ENCODE measurements at regions of chr16 and their contacts with region 1.

Region 1: DNA sequence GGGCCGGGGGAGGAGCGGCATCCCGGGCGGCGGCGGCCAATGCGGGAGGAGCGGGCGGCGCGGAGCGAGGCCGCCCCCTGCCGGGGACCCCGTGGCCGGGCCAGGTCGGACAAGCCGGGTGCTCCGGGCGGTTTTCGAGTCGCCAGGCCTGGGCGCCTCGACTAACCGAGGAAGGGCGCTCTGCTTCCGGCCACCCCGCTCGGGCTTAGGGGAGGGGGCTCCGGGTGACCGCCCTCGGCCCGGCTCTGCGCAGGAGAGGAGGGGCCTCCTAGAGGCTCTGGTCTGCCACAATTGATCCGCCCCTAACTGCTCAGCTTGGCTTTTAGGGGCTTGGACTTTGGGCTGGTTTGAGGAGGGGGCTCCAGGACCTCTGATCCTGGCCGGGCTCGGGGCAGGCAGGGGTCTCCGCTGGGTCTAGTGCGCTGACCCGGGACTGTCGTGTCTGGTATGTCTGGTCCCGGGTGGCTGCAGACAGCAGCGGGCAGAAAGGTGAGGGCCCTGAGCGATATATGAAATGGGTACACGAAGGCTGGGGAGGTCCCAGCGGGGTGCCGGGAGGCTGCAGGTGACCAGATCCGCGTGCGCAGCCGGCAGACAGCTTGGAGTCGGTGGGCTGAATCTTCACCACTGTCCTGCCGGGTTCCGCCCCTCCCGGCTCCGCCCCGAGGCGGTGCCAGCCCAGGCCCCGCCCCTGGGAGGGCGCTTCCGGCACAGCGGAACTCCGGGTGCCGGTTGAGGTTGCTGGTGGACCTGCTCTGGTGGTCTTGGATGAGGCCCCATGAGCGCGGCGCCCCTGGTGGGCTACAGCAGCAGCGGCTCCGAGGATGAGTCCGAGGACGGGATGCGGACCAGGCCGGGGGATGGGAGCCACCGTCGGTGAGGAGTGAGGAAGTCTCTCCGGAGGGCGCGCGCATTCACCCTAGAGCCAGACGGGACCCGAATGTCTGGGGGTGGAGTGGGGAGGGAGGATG is at the start of gene USB1:
- DNase-seq: peak; percentile 63 to 92 (median 80)
- ATAC-seq: peak; percentile 73
- H3K4me3 ChIP-seq: peak within 1 kb of the TSS; percentile 96
- H3K4me3 Mint-ChIP-seq: peak within 1 kb of the TSS; percentile 92
- H3K27ac ChIP-seq: peak within 1 kb of the TSS; percentile 79 to 86
- H3K27ac Mint-ChIP-seq: peak within 1 kb of the TSS; percentile 87
- H3K4me1 ChIP-seq: peaks cover 59% of the 10 kb centered on the region
- H3K4me1 Mint-ChIP-seq: peaks cover 57% of the 10 kb centered on the region
- H3K27me3 ChIP-seq: no peaks in the 10 kb centered on the region
- H3K27me3 Mint-ChIP-seq: no peaks in the 10 kb centered on the region
- CTCF ChIP-seq: peak; percentile 68
- total RNA-seq, gene USB1: 22.4 to 25.7 TPM

Region 2: GRCh38 chr16:57576429-57576870 is 424.5 kb before region 1 on chr16:
- CTCF ChIA-PET with region 1: no interaction called
- POLR2A ChIA-PET with region 1: no interaction called
- intact Hi-C with region 1: loop called (anchors 2 to 5 kb)
- DNase-seq: peak; percentile 69 to 89 (median 80)
- ATAC-seq: peak; percentile 94
- H3K4me3 ChIP-seq: no peak overlapping the region
- H3K4me3 Mint-ChIP-seq: no peak overlapping the region
- H3K27ac ChIP-seq: no peak overlapping the region
- H3K27ac Mint-ChIP-seq: no peak overlapping the region
- H3K4me1 ChIP-seq: peaks cover 35% of the 10 kb centered on the region
- H3K4me1 Mint-ChIP-seq: peaks cover 29% of the 10 kb centered on the region
- H3K27me3 ChIP-seq: no peaks in the 10 kb centered on the region
- H3K27me3 Mint-ChIP-seq: peaks cover 7% of the 10 kb centered on the region
- CTCF ChIP-seq: peak; percentile 98

Region 3: DNA sequence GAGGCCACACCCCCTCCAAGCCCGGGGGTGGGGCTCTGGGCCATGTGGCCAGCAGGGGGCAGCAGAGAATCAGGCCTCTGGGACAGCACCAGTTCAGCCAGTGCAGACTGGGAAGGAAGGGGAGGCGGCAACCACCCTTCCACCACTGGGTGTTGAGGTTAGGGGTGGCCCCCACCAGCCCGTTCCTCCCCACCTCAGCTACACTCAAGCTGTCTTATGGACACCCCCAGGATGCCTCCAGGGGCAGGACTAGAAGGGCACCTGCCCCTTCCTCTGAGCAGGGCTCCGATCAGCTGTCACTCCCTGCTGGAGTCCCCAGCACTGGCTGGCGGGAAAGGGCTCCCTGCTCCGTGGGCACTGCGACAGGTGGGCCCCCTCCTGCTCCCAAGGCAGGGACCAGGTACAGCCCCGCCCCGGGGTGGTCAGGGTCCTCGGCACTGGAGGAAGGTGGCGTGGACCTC is 243.6 kb before region 1 on chr16:
- CTCF ChIA-PET with region 1: no interaction called
- POLR2A ChIA-PET with region 1: no interaction called
- intact Hi-C with region 1: loop called in 1 of 2 experiments (anchors 2 kb)
- DNase-seq: peak; percentile 79 to 93 (median 88)
- ATAC-seq: peak; percentile 98
- H3K4me3 ChIP-seq: no peak overlapping the region
- H3K4me3 Mint-ChIP-seq: no peak overlapping the region
- H3K27ac ChIP-seq: no peak overlapping the region
- H3K27ac Mint-ChIP-seq: no peak overlapping the region
- H3K4me1 ChIP-seq: peaks cover 15% of the 10 kb centered on the region
- H3K4me1 Mint-ChIP-seq: no peaks in the 10 kb centered on the region
- H3K27me3 ChIP-seq: no peaks in the 10 kb centered on the region
- H3K27me3 Mint-ChIP-seq: no peaks in the 10 kb centered on the region
- CTCF ChIP-seq: peak; percentile 89

Region 4: DNA sequence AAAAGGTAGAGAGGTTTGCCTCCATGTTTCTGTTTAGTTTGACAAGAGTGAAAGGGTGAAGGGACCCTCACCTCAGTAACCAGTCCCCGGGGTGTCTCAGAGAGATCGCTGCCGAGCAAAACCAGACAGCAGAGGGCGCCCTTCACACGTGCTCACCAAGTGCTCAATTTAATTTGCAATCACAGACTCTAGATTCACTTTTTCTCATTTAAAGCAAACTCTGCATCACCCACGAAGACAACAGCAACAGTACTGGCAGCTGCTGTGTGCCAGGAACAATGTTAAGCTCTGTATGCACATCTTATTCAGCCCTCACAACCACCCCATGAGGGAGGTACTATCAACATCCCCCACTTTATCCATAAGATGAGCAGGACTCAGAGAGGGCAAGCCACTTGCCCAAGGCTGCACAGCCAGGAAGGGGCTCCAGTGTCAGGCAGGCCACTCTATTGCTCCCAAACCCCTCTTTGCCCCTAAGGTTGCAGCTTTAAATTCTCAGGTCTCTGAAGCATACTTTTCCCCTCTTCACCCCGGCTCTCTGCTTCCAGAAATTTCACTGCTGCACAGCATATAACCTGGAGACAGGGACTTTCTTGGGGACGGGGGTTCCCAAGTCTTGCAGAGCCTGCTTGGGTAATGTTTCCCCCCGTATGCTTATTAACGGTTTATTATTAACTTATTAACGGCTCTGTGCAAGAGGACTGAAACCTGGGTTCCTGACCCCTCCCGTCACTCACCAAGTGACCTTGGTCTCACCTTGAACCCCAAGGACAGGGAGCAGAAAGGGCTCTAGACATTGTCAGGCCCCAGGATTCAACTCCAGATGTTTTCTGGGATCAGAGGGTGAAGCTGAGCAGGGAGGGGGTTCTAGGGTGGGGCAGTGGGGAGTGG is 101.0 kb before region 1 on chr16:
- CTCF ChIA-PET with region 1: interaction called, 3 read pairs
- POLR2A ChIA-PET with region 1: interaction called, 4 read pairs
- intact Hi-C with region 1: loop called (anchors 1 kb)
- DNase-seq: peak; percentile 62 to 90 (median 78)
- ATAC-seq: peak; percentile 67
- H3K4me3 ChIP-seq: no peak overlapping the region
- H3K4me3 Mint-ChIP-seq: no peak overlapping the region
- H3K27ac ChIP-seq: no peak overlapping the region
- H3K27ac Mint-ChIP-seq: no peak overlapping the region
- H3K4me1 ChIP-seq: peaks cover 4% of the 10 kb centered on the region
- H3K4me1 Mint-ChIP-seq: peaks cover 6% of the 10 kb centered on the region
- H3K27me3 ChIP-seq: peaks cover 0 to 6% of the 10 kb centered on the region in 2 experiments
- H3K27me3 Mint-ChIP-seq: peaks cover 24% of the 10 kb centered on the region
- CTCF ChIP-seq: peak; percentile 83

Region 5: DNA sequence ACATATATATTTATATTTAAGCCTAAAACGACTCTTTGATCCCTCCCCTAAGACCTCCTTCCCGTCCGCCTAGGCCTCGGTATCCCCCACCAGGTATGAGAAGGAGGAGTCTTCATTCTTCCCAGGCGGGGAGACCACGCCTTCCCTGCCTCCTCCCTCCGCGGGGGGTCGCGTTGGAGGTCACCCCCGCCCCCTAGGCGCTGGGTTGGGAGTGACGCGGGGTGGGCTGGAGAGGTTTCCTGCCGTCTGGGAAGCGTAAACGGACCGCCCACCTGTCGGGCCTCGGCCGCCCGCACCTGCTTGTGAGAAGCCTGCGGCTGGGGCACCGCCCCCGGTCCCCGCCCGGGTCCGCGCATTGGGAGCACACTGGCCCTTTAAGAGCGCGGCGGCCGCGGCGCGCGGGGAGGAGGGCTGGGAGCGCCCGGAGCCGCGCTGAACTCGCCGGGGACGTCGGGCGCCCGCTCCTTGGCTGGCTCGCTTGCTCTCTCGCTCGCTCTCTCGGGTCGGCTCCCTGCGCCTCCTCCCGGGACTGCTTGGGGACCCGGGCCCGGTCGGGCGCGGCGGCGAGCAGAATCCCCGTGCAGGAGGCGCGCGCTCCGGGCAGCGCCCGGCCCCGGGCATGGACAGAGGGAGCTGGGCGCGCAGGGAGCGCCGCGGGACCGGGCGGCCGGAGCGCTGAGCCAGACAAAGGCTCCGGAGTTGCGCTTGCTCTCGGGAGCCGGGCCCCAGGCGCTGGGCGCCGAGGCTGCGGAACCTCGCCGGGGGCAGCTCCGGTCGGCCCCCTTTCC is 24.6 kb after region 1 on chr16 and contains the start of gene MMP15:
- CTCF ChIA-PET with region 1: no interaction called
- POLR2A ChIA-PET with region 1: interaction called, 13 read pairs
- intact Hi-C with region 1: no loop called
- DNase-seq: peak; percentile 22 to 80 (median 56)
- ATAC-seq: peak; percentile 61
- H3K4me3 ChIP-seq: peak within 1 kb of the TSS; percentile 61
- H3K4me3 Mint-ChIP-seq: peak within 1 kb of the TSS; percentile 96
- H3K27ac ChIP-seq: no peak within 1 kb of the TSS
- H3K27ac Mint-ChIP-seq: peak within 1 kb of the TSS; percentile 81
- H3K4me1 ChIP-seq: peaks cover 34% of the 10 kb centered on the region
- H3K4me1 Mint-ChIP-seq: peaks cover 18% of the 10 kb centered on the region
- H3K27me3 ChIP-seq: peaks cover 7 to 13% of the 10 kb centered on the region in 2 experiments
- H3K27me3 Mint-ChIP-seq: peaks cover 9% of the 10 kb centered on the region
- CTCF ChIP-seq: no peak
- total RNA-seq, gene MMP15: 0.25 to 0.31 TPM

Region 6: DNA sequence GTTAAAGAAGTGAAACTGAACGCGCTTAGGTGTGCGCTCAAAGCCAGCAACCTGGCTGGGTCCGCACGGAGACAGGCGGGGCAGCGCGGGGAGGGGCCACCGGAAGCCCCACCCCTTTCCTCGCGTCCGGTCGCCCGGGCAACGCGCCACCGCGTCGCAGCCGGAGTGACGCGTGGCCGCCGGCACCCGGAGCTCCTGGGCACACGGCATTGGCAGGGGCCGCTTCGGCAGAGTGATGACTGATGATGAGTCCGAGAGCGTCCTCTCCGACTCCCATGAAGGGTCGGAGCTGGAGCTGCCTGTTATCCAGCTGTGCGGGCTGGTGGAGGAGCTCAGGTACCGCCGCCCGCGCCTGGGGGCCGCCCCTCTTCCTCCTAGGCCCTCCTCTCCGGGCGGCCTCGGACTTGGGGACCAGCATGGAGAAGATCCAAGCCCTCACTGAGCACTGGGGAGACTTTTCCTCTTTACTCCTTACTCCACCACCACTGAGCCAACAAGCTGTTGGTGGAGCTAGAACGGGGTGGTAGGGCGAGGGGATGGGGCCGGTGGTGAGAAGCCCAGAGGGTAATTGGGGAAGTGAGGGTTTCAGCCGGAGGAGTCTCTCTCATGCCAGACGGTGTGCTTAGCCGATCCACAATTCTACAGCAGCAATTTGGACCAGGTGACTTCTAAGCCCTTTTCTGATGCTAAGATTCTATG is 248.9 kb after region 1 on chr16:
- CTCF ChIA-PET with region 1: no interaction called
- POLR2A ChIA-PET with region 1: no interaction called
- intact Hi-C with region 1: loop called in 1 of 2 experiments (anchors 5 kb)
- DNase-seq: peak; percentile 65 to 94 (median 82)
- ATAC-seq: peak; percentile 98
- H3K4me3 ChIP-seq: peak overlapping the region; percentile 73
- H3K4me3 Mint-ChIP-seq: peak overlapping the region; percentile 84
- H3K27ac ChIP-seq: no peak overlapping the region
- H3K27ac Mint-ChIP-seq: no peak overlapping the region
- H3K4me1 ChIP-seq: peaks cover 16% of the 10 kb centered on the region
- H3K4me1 Mint-ChIP-seq: peaks cover 14% of the 10 kb centered on the region
- H3K27me3 ChIP-seq: no peaks in the 10 kb centered on the region
- H3K27me3 Mint-ChIP-seq: peaks cover 8% of the 10 kb centered on the region
- CTCF ChIP-seq: no peak

Measured in CD4-positive, alpha-beta T cell (primary cell).